GM18951 (cell line): ENCODE measurements at regions of chr7 and their contacts with region 1.

Region 1: GRCh38 chr7:19117091-19117869 is at the start of gene TWIST1:
- POLR2A ChIP-seq: no peak

Region 2: GRCh38 chr7:19665399-19666008 is 548.2 kb after region 1 on chr7:
- in situ Hi-C with region 1: loop called (anchors 25 kb)
- POLR2A ChIP-seq: no peak